Activated CD8-positive, alpha-beta T cell treated with anti-CD3 and anti-CD28 coated beads, Interleukin-2, amount 10 ng/mL, durations not matched to agents 7 days and 5 days (primary cell): ENCODE measurements at regions of chr2 and their contacts with region 1.

Region 1: DNA sequence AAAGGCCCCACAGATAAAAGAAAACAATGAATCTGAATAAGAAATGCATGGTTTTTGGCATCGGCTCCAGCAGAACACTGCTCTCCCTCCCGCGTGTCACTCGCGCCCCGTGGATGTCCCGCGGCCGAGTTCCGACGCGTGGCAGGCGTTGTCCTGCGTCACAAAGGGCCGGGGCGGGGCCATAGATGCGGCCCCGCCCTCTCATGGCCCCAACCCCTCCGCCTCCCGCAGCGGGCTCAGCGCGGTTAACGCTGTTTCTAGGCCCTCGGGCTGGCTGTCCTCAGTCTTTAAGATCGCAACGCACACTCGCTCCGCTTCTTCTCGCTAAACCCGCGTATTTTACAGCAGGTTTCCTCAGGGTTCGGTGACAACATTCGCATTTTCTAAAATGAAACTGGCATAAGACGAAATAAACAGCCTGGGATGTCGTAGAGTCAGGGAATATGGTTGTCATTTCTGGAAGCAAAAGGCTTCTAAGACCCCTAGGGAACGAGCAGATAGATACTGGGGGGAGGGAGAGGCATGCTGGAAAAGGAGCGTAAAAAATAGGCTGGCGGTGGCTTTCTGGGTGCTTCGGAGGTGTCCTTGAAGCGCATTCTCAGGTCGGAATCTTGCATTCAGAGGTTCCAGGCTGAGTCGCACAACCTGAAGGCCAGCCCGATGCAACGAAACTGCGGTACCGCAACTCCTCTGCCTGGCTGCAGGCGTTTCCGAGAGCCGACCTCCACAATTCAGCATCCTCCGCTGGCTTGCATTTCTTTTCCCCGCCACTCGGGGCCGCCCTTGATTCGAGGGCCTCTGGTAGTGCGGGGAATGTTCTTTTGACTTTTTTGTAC is at the start of gene FKBP7:
- DNase-seq: peak; percentile 88
- ATAC-seq: peak; percentile 73
- H3K4me3 Mint-ChIP-seq: peak within 1 kb of the TSS; percentile 98
- H3K27ac Mint-ChIP-seq: peak within 1 kb of the TSS; percentile 99
- H3K4me1 Mint-ChIP-seq: peaks cover 42% of the 10 kb centered on the region
- H3K27me3 Mint-ChIP-seq: no peaks in the 10 kb centered on the region
- total RNA-seq, gene FKBP7: 2.6 to 3.6 TPM

Region 2: DNA sequence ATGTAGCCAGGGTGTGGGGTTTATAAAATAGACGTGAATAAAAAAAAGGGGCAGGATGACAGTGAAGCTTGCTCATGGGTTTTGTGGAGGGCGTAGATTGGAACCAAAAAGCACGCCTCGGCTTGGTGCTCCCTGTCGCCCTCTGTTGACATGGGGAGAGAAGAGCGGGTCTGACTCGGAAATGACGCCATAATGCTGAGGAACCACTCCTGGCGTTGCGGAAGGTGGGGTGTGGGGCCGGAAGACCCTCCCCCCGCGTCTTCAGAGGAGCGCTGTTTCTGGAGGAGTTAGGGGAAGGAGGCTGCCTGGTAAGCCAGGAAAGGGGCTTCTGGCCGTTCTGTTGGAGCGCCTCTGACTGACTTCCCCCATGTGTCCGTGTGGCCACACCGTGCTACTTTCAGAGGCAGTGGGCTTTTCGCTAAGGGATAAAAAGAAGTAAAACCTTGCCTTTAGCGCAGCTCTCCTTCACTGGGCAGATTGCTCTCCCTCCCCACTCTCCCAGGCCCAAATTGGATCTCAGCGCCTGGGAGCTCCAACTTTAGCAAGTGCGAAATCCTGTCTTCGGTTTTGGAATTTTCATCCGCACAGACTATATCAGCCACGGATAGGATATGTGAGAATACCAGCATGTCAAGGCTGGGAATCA is 44.4 kb after region 1 on chr2:
- CTCF ChIA-PET with region 1: interaction called, 33 read pairs
- POLR2A ChIA-PET with region 1: interaction called, 4 read pairs
- DNase-seq: peak; percentile 89
- ATAC-seq: peak; percentile 96
- H3K4me3 Mint-ChIP-seq: peak overlapping the region; percentile 93
- H3K27ac Mint-ChIP-seq: peak overlapping the region; percentile 90
- H3K4me1 Mint-ChIP-seq: peaks cover 21% of the 10 kb centered on the region
- H3K27me3 Mint-ChIP-seq: no peaks in the 10 kb centered on the region

Region 3: GRCh38 chr2:178628605-178629004 is 149.9 kb after region 1 on chr2:
- CTCF ChIA-PET with region 1: no interaction called
- POLR2A ChIA-PET with region 1: no interaction called
- DNase-seq: no peak
- ATAC-seq: no peak
- H3K4me3 Mint-ChIP-seq: no peak overlapping the region
- H3K27ac Mint-ChIP-seq: no peak overlapping the region
- H3K4me1 Mint-ChIP-seq: peaks cover 2% of the 10 kb centered on the region
- H3K27me3 Mint-ChIP-seq: no peaks in the 10 kb centered on the region